ENCODE measurements at regions of chr10 and their contacts with region 1.

Region 1: DNA sequence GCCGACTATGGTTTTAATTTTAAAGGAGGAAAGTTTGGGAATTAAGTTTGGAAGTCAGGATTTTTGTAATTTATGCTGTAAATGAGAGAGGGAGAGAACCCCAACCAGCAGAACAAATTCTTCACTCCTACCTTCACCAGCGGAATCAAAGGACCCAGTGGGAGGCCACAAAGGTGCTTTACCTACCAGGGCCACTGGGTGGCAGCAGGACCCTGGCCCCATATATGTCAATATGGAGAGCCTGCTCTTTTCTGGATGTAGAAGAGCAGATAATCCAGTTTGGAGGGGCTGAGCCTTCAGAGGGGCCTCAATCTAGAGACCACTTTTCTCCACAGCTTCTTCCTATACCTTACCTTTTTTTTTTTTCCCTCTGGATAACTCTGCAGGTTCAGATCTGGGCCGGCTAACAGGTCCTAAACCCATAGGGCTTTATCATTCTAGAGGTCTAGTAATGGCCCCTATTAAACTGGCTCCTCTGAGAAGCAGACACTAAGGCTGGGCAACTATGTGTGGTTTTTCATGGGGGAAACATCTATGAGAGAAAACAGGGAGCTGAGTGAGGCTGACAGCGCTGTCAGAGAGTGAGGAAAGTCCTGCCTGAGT is 8.5 kb upstream of the SCD start:
- DNase-seq: peak; percentile 73 to 82 (median 78)
- ATAC-seq: peak; percentile 52 to 68 (median 60)
- H3K4me3 ChIP-seq: no peak overlapping the region
- H3K27ac ChIP-seq: no peak overlapping the region
- H3K4me1 ChIP-seq: peaks cover 3 to 36% (median 13%) of the 10 kb centered on the region in 4 donors
- H3K27me3 ChIP-seq: no peaks in the 10 kb centered on the region
- CTCF ChIP-seq: peak; percentile 87 to 95 (median 92)
- POLR2A ChIP-seq: no peak

Region 2: GRCh38 chr10:100433253-100434240 is 95.0 kb after region 1 on chr10:
- intact Hi-C with region 1: loop called (anchors 2 to 5 kb)
- DNase-seq: peak; percentile 85 to 90 (median 85)
- ATAC-seq: peak; percentile 99 to 100 (median 100)
- H3K4me3 ChIP-seq: no peak overlapping the region
- H3K27ac ChIP-seq: no peak overlapping the region
- H3K4me1 ChIP-seq: no peaks in the 10 kb centered on the region
- H3K27me3 ChIP-seq: no peaks in the 10 kb centered on the region
- CTCF ChIP-seq: peak; percentile 98 to 100 (median 100)
- POLR2A ChIP-seq: no peak

Region 3: DNA sequence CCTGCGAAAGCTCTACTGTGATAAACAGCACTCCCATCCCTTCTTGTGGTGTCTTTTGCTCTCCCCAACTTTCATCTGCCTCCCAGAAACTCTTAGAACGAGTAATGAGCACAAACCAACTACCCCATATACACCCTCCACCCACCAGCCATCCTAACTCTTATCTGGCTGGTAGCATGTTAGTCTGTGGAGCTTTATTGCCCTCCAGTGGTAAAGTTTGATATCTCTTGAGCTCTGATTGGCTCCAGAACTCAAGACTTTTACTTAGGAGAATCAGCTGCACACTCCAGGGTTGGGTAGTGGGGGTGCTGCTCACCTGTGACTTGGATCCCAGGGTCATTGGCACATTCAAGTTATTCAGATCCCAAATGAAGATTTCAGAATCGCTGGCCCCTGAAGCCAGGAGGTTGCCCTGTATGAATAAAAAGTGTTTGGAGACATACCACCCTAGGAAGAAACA is 170.2 kb after region 1 on chr10:
- intact Hi-C with region 1: loop called in 1 of 2 experiments (anchors 10 kb)
- DNase-seq: no peak
- ATAC-seq: peak; percentile 68 to 86 (median 80)
- H3K4me3 ChIP-seq: no peak overlapping the region
- H3K27ac ChIP-seq: no peak overlapping the region
- H3K4me1 ChIP-seq: no peaks in the 10 kb centered on the region
- H3K27me3 ChIP-seq: no peaks in the 10 kb centered on the region
- CTCF ChIP-seq: peak; percentile 51 to 56 (median 52)
- POLR2A ChIP-seq: no peak

Measured in right lobe of liver (tissue), 6 donors.